G401 (cell line): ENCODE measurements at regions of chr1 and their contacts with region 1.

Region 1: GRCh38 chr1:40769815-40770214 is 13.8 kb upstream of the KCNQ4 start:
- DNase-seq: no peak

Region 2: GRCh38 chr1:40606978-40607377 is 162.8 kb before region 1 on chr1:
- in situ Hi-C with region 1: loop called (anchors 10 kb)
- DNase-seq: no peak

Region 3: DNA sequence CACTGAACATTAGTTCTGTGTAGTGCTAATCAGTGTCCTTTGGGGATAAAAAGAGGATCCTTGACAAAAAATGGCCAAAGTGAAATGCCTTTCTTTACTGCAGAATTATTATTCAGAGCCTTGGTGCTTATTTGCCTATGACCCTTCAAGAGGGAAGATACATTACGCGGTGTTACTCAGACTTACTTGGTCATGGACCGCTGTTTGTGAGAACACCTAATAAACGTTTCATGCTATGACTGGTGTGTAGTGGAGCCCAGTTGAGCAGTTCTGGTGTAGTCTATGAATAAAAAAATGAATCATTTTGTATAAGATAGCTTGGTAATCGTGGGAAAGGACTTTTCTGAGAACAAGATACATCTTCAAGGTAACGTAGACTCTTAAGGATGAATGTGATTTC is 70.0 kb before region 1 on chr1:
- in situ Hi-C with region 1: no loop called
- DNase-seq: no peak

Region 4: GRCh38 chr1:40849801-40850592 is 80.2 kb after region 1 on chr1:
- in situ Hi-C with region 1: loop called (anchors 5 kb)
- DNase-seq: peak; percentile 80